Psoas muscle (tissue), 8 donors: ENCODE measurements at regions of chr5 and their contacts with region 1.

Region 1: GRCh38 chr5:151345808-151346478 is 1.4 kb downstream of the SLC36A2 start:
- DNase-seq: peak; percentile 31 to 71
- ATAC-seq: peak; percentile 72 to 81 (median 77)
- H3K4me3 ChIP-seq: peak overlapping the region; percentile 69
- H3K27ac ChIP-seq: peak overlapping the region; percentile 91
- H3K4me1 ChIP-seq: peaks cover 30% of the 10 kb centered on the region
- H3K27me3 ChIP-seq: no peaks in the 10 kb centered on the region
- CTCF ChIP-seq: no peak

Region 2: GRCh38 chr5:151413800-151414199 is 67.9 kb after region 1 on chr5:
- intact Hi-C with region 1: no loop called
- DNase-seq: no peak
- ATAC-seq: no peak
- H3K4me3 ChIP-seq: no peak overlapping the region
- H3K27ac ChIP-seq: no peak overlapping the region
- H3K4me1 ChIP-seq: peaks cover 8% of the 10 kb centered on the region
- H3K27me3 ChIP-seq: no peaks in the 10 kb centered on the region
- CTCF ChIP-seq: no peak

Region 3: GRCh38 chr5:151432210-151432609 is 86.3 kb after region 1 on chr5:
- intact Hi-C with region 1: loop called (anchors 5 to 10 kb)
- DNase-seq: no peak
- ATAC-seq: no peak
- H3K4me3 ChIP-seq: peak overlapping the region; percentile 47
- H3K27ac ChIP-seq: peak overlapping the region; percentile 88
- H3K4me1 ChIP-seq: peaks cover 26% of the 10 kb centered on the region
- H3K27me3 ChIP-seq: no peaks in the 10 kb centered on the region
- CTCF ChIP-seq: no peak

Region 4: DNA sequence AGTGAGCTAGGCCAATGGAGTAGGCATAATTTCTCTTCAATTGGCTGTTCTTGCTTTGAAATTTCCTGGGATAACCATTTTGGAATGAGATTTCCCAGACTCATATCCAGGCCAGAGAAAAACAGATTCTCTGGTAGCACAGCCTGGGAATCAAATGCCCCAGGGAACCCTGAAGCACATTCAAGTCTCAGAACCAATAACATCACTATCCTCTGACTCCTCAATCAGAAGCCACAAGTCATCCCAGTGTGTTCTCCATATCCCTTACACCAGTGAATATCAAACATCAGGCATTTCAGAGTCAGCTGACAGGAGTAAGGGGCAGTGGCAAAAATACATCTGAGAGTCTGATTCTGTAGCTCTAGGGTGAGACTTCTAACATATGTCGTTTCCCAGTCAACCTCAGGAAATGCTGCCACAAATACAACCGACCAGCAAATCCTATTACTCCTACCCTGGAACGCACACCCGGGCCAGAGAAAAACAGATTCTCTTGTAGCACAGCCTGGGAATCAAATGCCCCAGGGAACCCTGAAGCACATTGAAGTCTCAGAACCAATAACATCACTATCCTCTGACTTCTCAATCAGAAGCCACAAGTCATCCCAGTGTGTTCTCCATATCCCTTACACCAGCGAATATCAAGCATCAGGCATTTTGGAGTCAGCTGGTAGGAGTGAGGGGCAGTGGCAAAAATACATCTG is 1596.8 kb after region 1 on chr5:
- intact Hi-C with region 1: no loop called
- DNase-seq: no peak
- ATAC-seq: no peak
- H3K4me3 ChIP-seq: no peak overlapping the region
- H3K27ac ChIP-seq: no peak overlapping the region
- H3K4me1 ChIP-seq: no peaks in the 10 kb centered on the region
- H3K27me3 ChIP-seq: no peaks in the 10 kb centered on the region
- CTCF ChIP-seq: no peak